ENCODE measurements at regions of chr1 and their contacts with region 1.

Region 1: GRCh38 chr1:50369830-50370229 is 53.4 kb downstream of the DMRTA2 start:
- DNase-seq: no peak
- H3K4me3 ChIP-seq: no peak overlapping the region
- H3K27ac ChIP-seq: no peak overlapping the region
- H3K4me1 ChIP-seq: no peaks in the 10 kb centered on the region
- H3K27me3 ChIP-seq: peaks cover 14% of the 10 kb centered on the region

Region 2: DNA sequence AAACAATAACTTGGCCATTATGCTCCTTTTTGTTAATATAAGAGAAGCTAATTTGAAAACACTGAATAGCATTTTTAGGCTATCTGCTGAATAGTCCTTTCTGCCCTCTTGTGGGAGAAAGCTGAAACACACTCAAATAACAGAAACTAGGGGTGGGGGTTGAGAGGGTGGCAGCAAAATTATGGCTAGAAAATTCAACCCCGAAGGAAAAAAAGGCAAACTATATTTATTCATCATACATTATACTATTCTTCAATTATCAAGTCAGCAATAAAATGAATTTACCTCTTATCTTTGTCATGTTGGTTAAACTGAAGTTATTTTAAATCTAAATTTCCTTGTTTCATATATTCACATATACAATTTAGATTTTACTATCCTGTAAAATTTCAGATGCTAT is 334.3 kb after region 1 on chr1:
- in situ Hi-C with region 1: loop called (anchors 10 kb)
- DNase-seq: peak; percentile 64
- H3K4me3 ChIP-seq: no peak overlapping the region
- H3K27ac ChIP-seq: no peak overlapping the region
- H3K4me1 ChIP-seq: no peaks in the 10 kb centered on the region
- H3K27me3 ChIP-seq: no peaks in the 10 kb centered on the region

Region 3: DNA sequence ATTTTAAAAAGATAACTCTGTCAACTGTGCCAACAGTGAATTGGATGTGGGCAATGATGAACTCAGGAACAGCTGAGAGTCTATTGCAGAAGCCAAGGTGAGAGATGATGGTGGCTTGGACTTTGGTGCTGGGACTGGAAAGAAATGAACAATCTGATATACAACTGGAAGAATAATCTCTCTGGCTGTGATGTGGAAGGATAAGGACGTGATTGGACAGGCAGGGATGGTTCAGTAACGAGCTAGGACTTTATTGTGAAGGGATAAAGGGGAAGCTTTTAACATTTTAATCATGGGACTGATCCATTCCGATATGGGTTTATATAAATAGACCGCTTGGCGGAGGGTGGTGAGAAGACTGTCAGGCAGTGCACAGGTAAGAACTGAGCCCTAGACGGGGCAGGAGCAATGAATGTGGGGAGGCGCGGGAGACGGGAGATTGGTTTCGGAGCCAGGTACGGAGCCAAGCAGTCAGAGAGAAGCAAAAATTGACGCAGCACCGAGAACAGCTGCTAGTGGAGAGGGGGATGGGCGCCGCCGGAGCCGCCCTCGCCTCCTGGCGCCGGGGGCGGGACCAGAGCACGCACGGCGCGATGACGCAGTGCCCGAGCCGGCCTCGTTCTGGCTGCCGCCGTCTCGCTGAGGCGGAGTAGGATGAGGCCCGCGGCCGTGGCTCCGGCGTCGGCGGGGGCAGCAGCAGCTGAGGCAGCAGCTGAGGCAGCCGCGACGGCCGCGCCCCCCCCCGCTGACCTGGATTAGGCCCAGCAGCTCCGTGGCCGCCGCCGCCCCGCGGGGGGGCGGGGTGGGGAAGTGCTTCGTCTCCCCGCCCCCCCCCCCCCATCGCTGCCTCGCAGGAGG is 866.1 kb after region 1 on chr1 and contains the start of gene RNF11:
- in situ Hi-C with region 1: no loop called
- DNase-seq: peak; percentile 98
- H3K4me3 ChIP-seq: peak within 1 kb of the TSS; percentile 82
- H3K27ac ChIP-seq: peak within 1 kb of the TSS; percentile 83
- H3K4me1 ChIP-seq: peaks cover 20% of the 10 kb centered on the region
- H3K27me3 ChIP-seq: no peaks in the 10 kb centered on the region
- total RNA-seq, gene RNF11: 120 and 128 TPM in 2 replicates

Measured in GM23248 (cell line).